Mammary epithelial cell (primary cell): ENCODE measurements at regions of chr15 and their contacts with region 1.

Region 1: GRCh38 chr15:51771773-51772172 is 20.4 kb downstream of the TMOD2 start:
- DNase-seq: no peak
- H3K4me3 ChIP-seq: no peak overlapping the region
- H3K27ac ChIP-seq: no peak overlapping the region
- H3K4me1 ChIP-seq: peaks cover 5% of the 10 kb centered on the region
- H3K27me3 ChIP-seq: no peaks in the 10 kb centered on the region
- CTCF ChIP-seq: no peak

Region 2: DNA sequence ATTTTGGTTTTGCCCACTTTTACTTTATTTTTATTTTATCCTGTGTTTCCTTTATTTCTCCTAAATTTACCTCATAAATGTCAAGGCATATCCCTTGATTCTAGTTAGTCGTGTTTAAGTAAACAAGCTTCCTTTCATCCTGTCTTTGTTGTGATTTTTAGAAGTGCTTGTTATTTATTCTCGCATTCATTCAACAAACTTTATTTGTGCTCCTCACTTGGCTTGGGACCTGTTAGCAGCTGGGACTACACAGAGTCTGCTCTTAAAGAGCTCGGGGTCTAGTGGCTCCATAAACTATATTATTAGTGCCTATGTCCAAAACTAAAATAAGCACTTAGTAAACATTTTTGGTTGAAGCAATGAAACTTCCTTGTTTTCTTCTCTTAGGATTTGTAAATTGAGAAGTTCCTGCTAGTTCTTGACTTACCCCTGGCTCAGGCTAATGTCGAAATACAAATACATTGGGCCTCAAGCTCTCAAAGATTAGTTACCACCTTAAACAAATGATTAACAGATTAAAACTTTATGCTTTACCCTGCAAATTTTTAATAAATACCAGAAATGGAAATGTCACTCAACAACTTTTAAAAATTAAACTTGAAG is 130.1 kb before region 1 on chr15:
- CTCF ChIA-PET with region 1: no interaction called
- dilution Hi-C with region 1: no loop called
- in situ Hi-C with region 1: loop called (anchors 5 kb)
- intact Hi-C with region 1: no loop called
- DNase-seq: no peak
- H3K4me3 ChIP-seq: no peak overlapping the region
- H3K27ac ChIP-seq: no peak overlapping the region
- H3K4me1 ChIP-seq: no peaks in the 10 kb centered on the region
- H3K27me3 ChIP-seq: no peaks in the 10 kb centered on the region
- CTCF ChIP-seq: no peak